ENCODE measurements at regions of chr15 and their contacts with region 1.

Region 1: DNA sequence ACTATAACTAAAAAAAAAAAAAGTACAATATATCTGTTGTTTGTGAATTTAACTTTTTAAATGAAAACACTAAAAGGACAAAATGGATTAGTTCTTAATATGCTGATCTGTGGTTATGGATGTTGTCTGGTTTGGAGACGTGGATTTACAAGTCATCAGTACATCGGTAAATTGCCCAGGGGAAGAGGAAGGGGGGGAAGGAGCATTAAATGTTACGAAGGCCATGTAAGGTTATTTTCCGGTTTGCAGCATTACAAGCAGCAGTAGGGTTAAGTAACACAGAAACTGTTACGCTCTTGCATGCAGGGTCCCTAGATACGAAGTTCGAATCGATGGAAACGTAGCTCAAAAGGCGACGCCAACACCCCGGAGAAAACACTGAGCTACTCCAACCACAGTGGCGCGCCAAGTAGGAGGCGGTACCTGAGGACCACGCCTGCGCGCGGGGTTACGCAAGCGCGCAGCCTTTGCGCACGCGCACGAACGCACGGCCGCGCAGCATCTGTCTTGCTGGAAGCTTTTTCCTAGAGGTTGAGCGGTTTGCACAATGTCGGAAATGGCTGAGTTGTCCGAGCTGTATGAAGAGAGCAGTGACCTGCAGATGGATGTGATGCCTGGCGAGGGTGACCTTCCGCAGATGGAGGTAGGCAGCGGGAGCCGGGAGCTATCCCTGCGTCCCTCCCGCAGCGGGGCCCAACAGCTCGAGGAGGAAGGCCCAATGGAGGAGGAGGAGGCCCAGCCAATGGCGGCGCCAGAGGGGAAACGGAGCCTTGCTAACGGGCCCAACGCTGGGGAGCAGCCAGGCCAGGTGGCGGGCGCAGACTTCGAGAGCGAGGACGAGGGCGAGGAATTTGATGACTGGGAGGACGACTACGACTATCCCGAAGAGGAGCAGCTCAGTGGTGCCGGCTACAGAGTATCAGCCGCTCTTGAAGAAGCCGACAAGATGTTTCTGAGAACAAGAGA is at the start of gene EID1:
- DNase-seq: peak; percentile 87 to 94 (median 92)
- ATAC-seq: peak; percentile 95
- H3K4me3 ChIP-seq: peak within 1 kb of the TSS; percentile 75
- H3K4me3 Mint-ChIP-seq: peak within 1 kb of the TSS; percentile 93 to 100 (median 99)
- H3K27ac ChIP-seq: peak within 1 kb of the TSS; percentile 70
- H3K27ac Mint-ChIP-seq: peak within 1 kb of the TSS; percentile 95 to 99 (median 98)
- H3K4me1 ChIP-seq: peaks cover 4 to 17% of the 10 kb centered on the region in 2 donors
- H3K4me1 Mint-ChIP-seq: peaks cover 11 to 48% (median 26%) of the 10 kb centered on the region in 7 donors
- H3K27me3 ChIP-seq: no peaks in the 10 kb centered on the region
- H3K27me3 Mint-ChIP-seq: peaks cover 0 to 25% (median 15%) of the 10 kb centered on the region in 5 donors
- total RNA-seq, gene EID1: 40.3 to 96.0 (median 56.5) TPM

Region 2: DNA sequence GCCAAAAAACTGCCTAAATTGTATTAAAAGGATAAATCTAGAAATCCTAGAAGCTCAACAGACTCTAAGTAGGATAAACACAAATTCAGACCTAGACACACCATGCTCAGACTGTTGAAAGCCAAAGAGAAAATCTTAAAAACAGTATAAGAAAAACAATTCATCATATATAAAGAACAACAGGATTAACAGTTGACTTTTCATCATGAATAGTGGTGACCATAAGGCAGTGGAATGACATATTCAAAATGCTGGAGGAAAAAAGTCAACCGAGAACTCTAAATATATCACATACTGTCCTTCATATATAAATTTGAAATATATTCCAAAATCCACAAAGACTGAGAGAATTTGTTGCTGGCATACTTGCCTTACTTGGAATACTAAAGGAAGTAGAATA is 144.3 kb before region 1 on chr15:
- CTCF ChIA-PET with region 1: no interaction called
- POLR2A ChIA-PET with region 1: no interaction called
- intact Hi-C with region 1: no loop called
- DNase-seq: no peak
- ATAC-seq: no peak
- H3K4me3 ChIP-seq: no peak overlapping the region
- H3K4me3 Mint-ChIP-seq: no peak overlapping the region
- H3K27ac ChIP-seq: no peak overlapping the region
- H3K27ac Mint-ChIP-seq: no peak overlapping the region
- H3K4me1 ChIP-seq: no peaks in the 10 kb centered on the region
- H3K4me1 Mint-ChIP-seq: no peaks in the 10 kb centered on the region
- H3K27me3 ChIP-seq: no peaks in the 10 kb centered on the region
- H3K27me3 Mint-ChIP-seq: no peaks in the 10 kb centered on the region

Region 3: GRCh38 chr15:48810414-48811317 is 67.2 kb before region 1 on chr15 and contains the start of gene CEP152:
- CTCF ChIA-PET with region 1: no interaction called
- POLR2A ChIA-PET with region 1: interaction called, 13 read pairs
- intact Hi-C with region 1: loop called (anchors 1 kb)
- DNase-seq: peak; percentile 91 to 99 (median 98)
- ATAC-seq: peak; percentile 98
- H3K4me3 ChIP-seq: peak within 1 kb of the TSS; percentile 78
- H3K4me3 Mint-ChIP-seq: peak within 1 kb of the TSS; percentile 82 to 96 (median 89)
- H3K27ac ChIP-seq: peak within 1 kb of the TSS; percentile 76
- H3K27ac Mint-ChIP-seq: peak within 1 kb of the TSS; percentile 14 to 96 (median 87)
- H3K4me1 ChIP-seq: peaks cover 9 to 13% of the 10 kb centered on the region in 2 donors
- H3K4me1 Mint-ChIP-seq: peaks cover 12 to 38% (median 33%) of the 10 kb centered on the region in 7 donors
- H3K27me3 ChIP-seq: no peaks in the 10 kb centered on the region
- H3K27me3 Mint-ChIP-seq: peaks cover 0 to 24% (median 0%) of the 10 kb centered on the region in 5 donors
- total RNA-seq, gene CEP152: 6.2 to 26.3 (median 17.0) TPM

Region 4: DNA sequence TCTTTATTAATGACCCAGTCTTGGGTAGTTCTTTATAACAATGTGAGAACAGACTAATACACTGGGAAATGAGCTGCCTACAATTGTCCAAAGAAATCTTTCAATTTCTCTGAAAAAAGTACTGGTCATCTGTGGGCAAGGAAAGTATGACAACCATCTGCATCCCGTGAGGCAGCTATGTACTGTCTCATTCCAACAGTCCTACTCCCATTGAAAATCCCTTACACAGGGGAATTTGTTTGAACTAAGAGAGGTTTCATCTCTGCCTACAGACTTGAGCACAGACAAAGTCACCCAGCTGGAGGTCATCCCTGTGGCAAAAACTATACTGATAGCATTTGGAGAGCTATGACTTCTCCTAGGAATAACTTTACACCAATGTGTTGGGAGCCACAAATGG is 58.8 kb after region 1 on chr15:
- CTCF ChIA-PET with region 1: no interaction called
- POLR2A ChIA-PET with region 1: no interaction called
- intact Hi-C with region 1: no loop called
- DNase-seq: no peak
- ATAC-seq: no peak
- H3K4me3 ChIP-seq: no peak overlapping the region
- H3K4me3 Mint-ChIP-seq: no peak overlapping the region
- H3K27ac ChIP-seq: no peak overlapping the region
- H3K27ac Mint-ChIP-seq: no peak overlapping the region
- H3K4me1 ChIP-seq: no peaks in the 10 kb centered on the region
- H3K4me1 Mint-ChIP-seq: peaks cover 0 to 6% (median 0%) of the 10 kb centered on the region in 7 donors
- H3K27me3 ChIP-seq: no peaks in the 10 kb centered on the region
- H3K27me3 Mint-ChIP-seq: peaks cover 2 to 58% (median 12%) of the 10 kb centered on the region in 5 donors

Region 5: GRCh38 chr15:48963524-48964113 is 85.7 kb after region 1 on chr15 and contains the start of gene SHC4:
- CTCF ChIA-PET with region 1: no interaction called
- POLR2A ChIA-PET with region 1: no interaction called
- intact Hi-C with region 1: loop called in 1 of 2 experiments (anchors 1 kb)
- DNase-seq: peak in 4 of 9 donors; percentile 21 to 37 (median 32)
- ATAC-seq: peak; percentile 64
- H3K4me3 ChIP-seq: peak within 1 kb of the TSS; percentile 58
- H3K4me3 Mint-ChIP-seq: peak within 1 kb of the TSS; percentile 68 to 91 (median 84)
- H3K27ac ChIP-seq: no peak within 1 kb of the TSS
- H3K27ac Mint-ChIP-seq: peak within 1 kb of the TSS in 3 of 9 donors; percentile 41 to 68 (median 56)
- H3K4me1 ChIP-seq: peaks cover 17 to 23% of the 10 kb centered on the region in 2 donors
- H3K4me1 Mint-ChIP-seq: peaks cover 15 to 41% (median 21%) of the 10 kb centered on the region in 7 donors
- H3K27me3 ChIP-seq: peaks cover 0 to 18% of the 10 kb centered on the region in 2 donors
- H3K27me3 Mint-ChIP-seq: peaks cover 13 to 65% (median 44%) of the 10 kb centered on the region in 5 donors
- total RNA-seq, gene SHC4: 1.2 TPM in 1 of 5 experiments, not detected in the others

Region 6: DNA sequence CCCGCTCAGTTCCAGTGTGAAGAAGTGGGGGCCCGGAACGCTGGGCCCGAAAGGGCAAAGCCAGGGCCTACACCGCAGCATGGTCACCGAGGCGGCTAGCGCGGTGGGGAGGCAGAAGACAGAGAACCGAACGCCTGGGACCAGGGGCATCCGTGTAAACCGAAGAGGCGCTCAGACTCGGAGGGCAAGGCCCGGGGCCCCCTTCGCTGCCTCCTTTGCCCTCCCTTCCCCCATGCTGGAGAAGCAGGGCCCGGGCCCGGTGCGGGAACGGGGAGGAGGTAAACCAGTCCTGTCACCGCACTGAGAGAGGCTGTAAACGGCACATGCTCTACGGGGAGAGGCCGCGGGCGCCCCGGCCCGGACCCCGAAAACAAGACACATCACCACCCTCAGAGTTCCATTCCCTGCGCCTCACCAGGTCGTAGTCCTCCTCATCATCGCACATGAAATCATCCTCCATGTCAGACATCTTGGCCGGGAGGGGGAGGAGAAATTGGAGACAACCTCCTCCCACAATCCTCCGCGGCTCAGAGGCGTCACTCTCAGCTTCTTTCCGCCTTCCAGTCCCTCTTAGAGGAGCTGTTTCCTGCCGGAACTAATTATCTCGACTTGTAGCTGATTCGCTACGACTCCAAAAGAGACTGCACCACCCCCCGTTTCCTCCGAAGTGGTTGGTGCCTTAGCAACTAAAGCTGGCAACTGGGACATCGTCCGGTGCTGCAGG is 277.4 kb after region 1 on chr15 and contains the start of gene COPS2:
- CTCF ChIA-PET with region 1: no interaction called
- POLR2A ChIA-PET with region 1: interaction called, 15 read pairs
- intact Hi-C with region 1: loop called (anchors 1 kb)
- DNase-seq: peak; percentile 69 to 96 (median 94)
- ATAC-seq: peak; percentile 99
- H3K4me3 ChIP-seq: peak within 1 kb of the TSS; percentile 88
- H3K4me3 Mint-ChIP-seq: peak within 1 kb of the TSS; percentile 95 to 100 (median 98)
- H3K27ac ChIP-seq: peak within 1 kb of the TSS; percentile 93
- H3K27ac Mint-ChIP-seq: peak within 1 kb of the TSS; percentile 93 to 100 (median 97)
- H3K4me1 ChIP-seq: peaks cover 9 to 25% of the 10 kb centered on the region in 2 donors
- H3K4me1 Mint-ChIP-seq: peaks cover 40 to 72% (median 59%) of the 10 kb centered on the region in 7 donors
- H3K27me3 ChIP-seq: no peaks in the 10 kb centered on the region
- H3K27me3 Mint-ChIP-seq: no peaks in the 10 kb centered on the region
- total RNA-seq, gene COPS2: 51.0 to 91.5 (median 63.6) TPM

Region 7: DNA sequence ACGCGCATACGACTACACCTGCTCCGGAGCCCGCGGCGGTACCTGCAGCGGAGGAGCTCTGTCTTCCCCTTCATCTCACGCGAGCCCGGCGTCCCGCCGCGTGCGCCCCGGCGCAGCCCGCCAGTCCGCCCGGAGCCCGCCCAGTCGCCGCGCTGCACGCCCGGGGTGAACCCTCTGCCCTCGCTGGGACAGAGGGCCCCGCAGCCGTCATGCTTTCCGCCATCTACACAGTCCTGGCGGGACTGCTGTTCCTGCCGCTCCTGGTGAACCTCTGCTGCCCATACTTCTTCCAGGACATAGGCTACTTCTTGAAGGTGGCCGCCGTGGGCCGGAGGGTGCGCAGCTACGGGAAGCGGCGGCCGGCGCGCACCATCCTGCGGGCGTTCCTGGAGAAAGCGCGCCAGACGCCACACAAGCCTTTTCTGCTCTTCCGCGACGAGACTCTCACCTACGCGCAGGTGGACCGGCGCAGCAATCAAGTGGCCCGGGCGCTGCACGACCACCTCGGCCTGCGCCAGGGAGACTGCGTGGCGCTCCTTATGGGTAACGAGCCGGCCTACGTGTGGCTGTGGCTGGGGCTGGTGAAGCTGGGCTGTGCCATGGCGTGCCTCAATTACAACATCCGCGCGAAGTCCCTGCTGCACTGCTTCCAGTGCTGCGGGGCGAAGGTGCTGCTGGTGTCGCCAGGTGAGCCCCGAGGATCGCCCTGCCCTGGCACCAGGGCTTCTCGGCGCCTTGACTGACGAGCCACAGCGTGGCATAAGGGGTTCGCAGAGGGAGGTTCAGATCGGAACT is 1304.5 kb after region 1 on chr15:
- CTCF ChIA-PET with region 1: no interaction called
- POLR2A ChIA-PET with region 1: no interaction called
- intact Hi-C with region 1: loop called in 1 of 2 experiments (anchors 1 kb)
- DNase-seq: peak in 6 of 9 donors; percentile 13 to 65 (median 21)
- ATAC-seq: peak; percentile 56
- H3K4me3 ChIP-seq: peak overlapping the region; percentile 67
- H3K4me3 Mint-ChIP-seq: peak overlapping the region; percentile 82 to 98 (median 90)
- H3K27ac ChIP-seq: no peak overlapping the region
- H3K27ac Mint-ChIP-seq: peak overlapping the region in 3 of 9 donors; percentile 39 to 85 (median 54)
- H3K4me1 ChIP-seq: peaks cover 0 to 6% of the 10 kb centered on the region in 2 donors
- H3K4me1 Mint-ChIP-seq: peaks cover 7 to 56% (median 12%) of the 10 kb centered on the region in 7 donors
- H3K27me3 ChIP-seq: no peaks in the 10 kb centered on the region
- H3K27me3 Mint-ChIP-seq: peaks cover 0 to 53% (median 38%) of the 10 kb centered on the region in 5 donors

Region 8: DNA sequence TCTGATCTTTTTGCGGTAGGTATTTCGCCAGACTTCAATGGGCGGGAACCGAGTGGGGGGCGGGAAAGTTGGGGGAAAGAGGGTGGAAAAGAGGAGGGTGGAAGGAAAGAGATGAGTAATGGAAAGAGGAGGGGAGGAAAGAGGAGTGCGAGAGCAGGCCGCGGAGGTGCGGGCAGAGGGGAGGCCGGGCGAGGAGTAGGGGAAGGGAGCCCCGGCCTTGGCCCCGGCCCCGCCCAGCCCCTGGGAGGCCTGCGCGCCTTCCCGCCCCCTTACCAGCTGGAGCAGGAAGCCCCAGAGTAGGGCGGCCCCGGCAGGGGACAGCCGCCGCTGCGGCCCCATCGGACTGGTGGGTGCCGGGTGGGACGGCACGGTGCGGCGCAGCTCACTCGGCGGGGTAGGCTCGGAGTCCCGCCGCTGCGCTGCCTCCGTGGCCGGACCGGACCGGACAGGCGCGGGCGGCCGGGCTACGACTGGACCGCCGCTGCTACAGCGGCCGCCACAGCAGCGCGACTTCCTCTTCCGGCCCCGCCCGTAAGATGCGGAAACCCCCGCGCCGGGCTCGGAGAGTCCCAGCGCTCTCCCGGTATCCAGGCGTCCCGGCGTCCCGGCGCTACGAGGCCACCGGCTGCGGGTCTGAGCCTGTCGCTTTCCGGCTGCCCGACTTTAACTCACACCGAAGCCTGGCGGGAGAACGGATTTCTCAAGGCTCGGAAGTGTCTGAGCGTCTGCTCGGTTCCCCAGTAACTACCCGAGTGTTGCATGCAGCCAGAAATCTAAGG is 1887.5 kb after region 1 on chr15 and contains the start of gene SPPL2A:
- CTCF ChIA-PET with region 1: no interaction called
- POLR2A ChIA-PET with region 1: no interaction called
- intact Hi-C with region 1: loop called in 1 of 2 experiments (anchors 10 kb)
- DNase-seq: peak; percentile 45 to 90 (median 61)
- ATAC-seq: peak; percentile 91
- H3K4me3 ChIP-seq: peak within 1 kb of the TSS; percentile 77
- H3K4me3 Mint-ChIP-seq: peak within 1 kb of the TSS; percentile 81 to 97 (median 94)
- H3K27ac ChIP-seq: peak within 1 kb of the TSS; percentile 90
- H3K27ac Mint-ChIP-seq: peak within 1 kb of the TSS; percentile 85 to 98 (median 93)
- H3K4me1 ChIP-seq: no peaks in the 10 kb centered on the region
- H3K4me1 Mint-ChIP-seq: peaks cover 27 to 58% (median 51%) of the 10 kb centered on the region in 7 donors
- H3K27me3 ChIP-seq: no peaks in the 10 kb centered on the region
- H3K27me3 Mint-ChIP-seq: no peaks in the 10 kb centered on the region
- total RNA-seq, gene SPPL2A: 42.1 to 100 (median 58.1) TPM

Measured in naive thymus-derived CD4-positive, alpha-beta T cell (primary cell).